Mammary epithelial cell (primary cell): ENCODE measurements at regions of chr5 and their contacts with region 1.

Region 1: DNA sequence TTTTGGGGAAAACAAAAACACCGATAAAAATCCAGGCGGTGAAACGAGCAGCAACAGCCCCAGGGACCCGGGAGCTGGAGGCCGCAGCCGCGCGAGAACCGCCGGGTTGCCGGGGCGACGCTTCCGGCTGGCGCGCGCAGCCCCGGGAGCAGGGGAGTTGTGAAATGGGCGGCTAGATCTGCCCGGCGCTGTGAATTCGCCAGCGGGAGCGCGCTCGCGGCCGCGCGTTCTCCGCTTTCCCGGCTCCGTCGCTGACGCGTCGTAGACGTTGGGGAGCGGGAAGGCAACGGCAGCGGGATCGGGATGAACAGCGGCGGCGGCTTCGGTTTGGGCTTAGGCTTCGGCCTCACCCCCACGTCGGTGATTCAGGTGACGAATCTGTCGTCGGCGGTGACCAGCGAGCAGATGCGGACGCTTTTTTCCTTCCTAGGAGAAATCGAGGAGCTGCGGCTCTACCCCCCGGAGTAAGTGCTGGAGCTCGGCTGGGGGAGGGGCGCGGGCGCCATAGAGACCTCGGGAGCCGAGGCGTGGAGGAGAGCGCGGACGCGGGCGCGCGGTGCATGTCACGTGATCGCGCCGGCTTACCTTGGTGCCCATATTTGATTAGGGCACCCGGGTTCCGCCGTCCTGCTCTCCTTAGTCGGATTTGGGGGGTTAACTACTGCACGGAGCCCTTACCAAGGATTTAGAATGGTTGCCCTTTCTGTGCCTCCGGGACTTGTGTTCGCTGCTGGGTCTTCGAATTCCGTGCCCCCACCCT is at the start of gene SREK1:
- DNase-seq: peak; percentile 94
- H3K4me3 ChIP-seq: peak within 1 kb of the TSS; percentile 69 to 89 (median 89)
- H3K27ac ChIP-seq: peak within 1 kb of the TSS; percentile 96
- H3K4me1 ChIP-seq: peaks cover 14% of the 10 kb centered on the region
- H3K27me3 ChIP-seq: no peaks in the 10 kb centered on the region
- CTCF ChIP-seq: no peak
- total RNA-seq, gene SREK1: 62.2 to 71.5 TPM

Region 2: DNA sequence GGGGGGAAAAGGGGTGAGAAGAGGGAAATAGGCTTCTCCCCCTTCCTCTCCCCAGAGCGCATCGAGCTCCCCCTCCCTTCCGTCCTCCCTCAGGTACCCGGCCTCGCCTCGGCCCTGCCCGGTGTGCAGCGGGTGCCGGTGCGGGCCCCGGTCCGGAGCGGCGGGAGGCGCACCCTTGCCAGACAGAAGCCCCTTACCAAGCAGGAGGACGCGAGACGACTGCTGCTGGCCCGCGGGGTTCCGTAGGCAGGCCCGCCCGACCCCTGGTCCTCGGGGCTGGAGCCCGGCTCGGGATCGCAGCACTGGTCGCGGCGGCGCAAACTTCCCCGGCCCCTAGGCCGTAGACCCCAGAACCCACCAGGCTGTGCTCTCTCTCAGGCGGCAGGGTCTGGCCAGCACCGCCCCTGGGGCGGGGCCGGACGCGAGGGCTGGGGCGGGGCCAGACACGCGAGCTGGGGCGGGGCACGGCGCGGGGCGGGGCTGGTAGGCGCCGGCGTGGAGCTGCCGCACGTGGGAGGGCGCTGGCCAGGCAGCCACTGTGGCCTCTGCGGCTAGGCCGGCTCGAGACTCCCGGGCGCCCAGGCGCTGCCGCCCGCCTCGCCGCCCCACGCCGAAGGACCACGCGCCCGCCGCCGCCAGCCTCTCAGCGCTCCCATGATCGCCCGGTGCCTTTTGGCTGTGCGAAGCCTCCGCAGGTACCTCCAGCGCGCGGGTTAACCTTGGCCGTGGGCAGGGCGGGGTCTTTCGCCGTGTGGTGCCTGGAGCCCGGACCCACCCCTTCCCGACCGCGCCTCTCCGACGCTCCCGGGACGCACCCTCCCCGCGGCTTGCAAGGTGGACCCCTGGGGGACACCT is 422.3 kb before region 1 on chr5 and contains the starts of genes NLN and SGTB:
- CTCF ChIA-PET with region 1: no interaction called
- dilution Hi-C with region 1: no loop called
- in situ Hi-C with region 1: no loop called
- intact Hi-C with region 1: loop called (anchors 1 kb)
- DNase-seq: peak; percentile 67
- H3K4me3 ChIP-seq: peak within 1 kb of the TSS; percentile 90 to 96 (median 96)
- H3K27ac ChIP-seq: peak within 1 kb of the TSS; percentile 69
- H3K4me1 ChIP-seq: peaks cover 3% of the 10 kb centered on the region
- H3K27me3 ChIP-seq: no peaks in the 10 kb centered on the region
- CTCF ChIP-seq: no peak
- total RNA-seq, gene NLN: 25.5 to 37.0 TPM
- total RNA-seq, gene SGTB: 15.2 to 20.9 TPM

Region 3: GRCh38 chr5:66186108-66186507 is 41.9 kb after region 1 on chr5:
- CTCF ChIA-PET with region 1: no interaction called
- dilution Hi-C with region 1: no loop called
- in situ Hi-C with region 1: no loop called
- intact Hi-C with region 1: no loop called
- DNase-seq: no peak
- H3K4me3 ChIP-seq: no peak overlapping the region
- H3K27ac ChIP-seq: no peak overlapping the region
- H3K4me1 ChIP-seq: no peaks in the 10 kb centered on the region
- H3K27me3 ChIP-seq: no peaks in the 10 kb centered on the region
- CTCF ChIP-seq: no peak

Region 4: DNA sequence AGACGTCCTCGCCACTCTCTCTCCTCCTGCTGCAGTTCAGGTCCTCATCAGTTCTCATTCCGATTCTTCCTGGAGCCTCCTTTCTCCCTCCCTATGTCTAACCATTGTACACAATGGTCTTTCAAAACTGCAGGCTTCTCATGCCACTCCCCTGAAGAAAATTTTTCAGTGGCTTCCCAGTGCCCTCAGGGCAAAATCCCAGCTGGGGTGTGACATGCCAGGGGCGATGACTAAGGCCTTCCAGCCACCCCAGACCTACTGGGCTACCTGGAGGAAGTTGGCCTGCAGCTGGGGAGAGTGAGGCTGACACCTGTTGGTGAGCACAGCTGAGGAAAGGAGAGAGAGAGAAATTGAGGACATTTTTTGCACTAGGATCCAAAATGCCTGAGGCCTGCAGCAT is 65.1 kb after region 1 on chr5:
- CTCF ChIA-PET with region 1: no interaction called
- dilution Hi-C with region 1: loop called (anchors 5 kb)
- in situ Hi-C with region 1: no loop called
- intact Hi-C with region 1: no loop called
- DNase-seq: peak; percentile 93
- H3K4me3 ChIP-seq: no peak overlapping the region
- H3K27ac ChIP-seq: peak overlapping the region; percentile 56
- H3K4me1 ChIP-seq: peaks cover 30% of the 10 kb centered on the region
- H3K27me3 ChIP-seq: no peaks in the 10 kb centered on the region
- CTCF ChIP-seq: peak; percentile 27 to 49